ENCODE measurements at regions of chr6 and their contacts with region 1.

Region 1: GRCh38 chr6:134097114-134097707 is 44.8 kb upstream of the SLC2A12 start:
- DNase-seq: peak; percentile 27 to 78 (median 65)
- ATAC-seq: no peak
- H3K4me3 ChIP-seq: no peak overlapping the region
- H3K4me3 Mint-ChIP-seq: no peak overlapping the region
- H3K27ac ChIP-seq: no peak overlapping the region
- H3K27ac Mint-ChIP-seq: no peak overlapping the region
- H3K4me1 ChIP-seq: no peaks in the 10 kb centered on the region
- H3K4me1 Mint-ChIP-seq: no peaks in the 10 kb centered on the region
- H3K27me3 ChIP-seq: peaks cover 0 to 3% of the 10 kb centered on the region in 2 experiments
- H3K27me3 Mint-ChIP-seq: peaks cover 13% of the 10 kb centered on the region
- CTCF ChIP-seq: peak; percentile 88

Region 2: GRCh38 chr6:132830334-132830751 is 1266.9 kb before region 1 on chr6:
- CTCF ChIA-PET with region 1: no interaction called
- POLR2A ChIA-PET with region 1: no interaction called
- intact Hi-C with region 1: loop called in 1 of 2 experiments (anchors 5 kb)
- DNase-seq: no peak
- ATAC-seq: no peak
- H3K4me3 ChIP-seq: no peak overlapping the region
- H3K4me3 Mint-ChIP-seq: no peak overlapping the region
- H3K27ac ChIP-seq: no peak overlapping the region
- H3K27ac Mint-ChIP-seq: no peak overlapping the region
- H3K4me1 ChIP-seq: no peaks in the 10 kb centered on the region
- H3K4me1 Mint-ChIP-seq: no peaks in the 10 kb centered on the region
- H3K27me3 ChIP-seq: no peaks in the 10 kb centered on the region
- H3K27me3 Mint-ChIP-seq: no peaks in the 10 kb centered on the region
- CTCF ChIP-seq: no peak

Region 3: GRCh38 chr6:133568970-133569889 is 528.0 kb before region 1 on chr6:
- CTCF ChIA-PET with region 1: no interaction called
- POLR2A ChIA-PET with region 1: no interaction called
- intact Hi-C with region 1: loop called in 1 of 2 experiments (anchors 10 kb)
- DNase-seq: peak in 2 of 9 experiments; percentile 12 to 33
- ATAC-seq: no peak
- H3K4me3 ChIP-seq: no peak overlapping the region
- H3K4me3 Mint-ChIP-seq: peak overlapping the region; percentile 44
- H3K27ac ChIP-seq: no peak overlapping the region
- H3K27ac Mint-ChIP-seq: no peak overlapping the region
- H3K4me1 ChIP-seq: no peaks in the 10 kb centered on the region
- H3K4me1 Mint-ChIP-seq: peaks cover 6% of the 10 kb centered on the region
- H3K27me3 ChIP-seq: peaks cover 0 to 3% of the 10 kb centered on the region in 2 experiments
- H3K27me3 Mint-ChIP-seq: peaks cover 25% of the 10 kb centered on the region
- CTCF ChIP-seq: peak; percentile 43

Region 4: GRCh38 chr6:133916650-133917151 is 180.5 kb before region 1 on chr6:
- CTCF ChIA-PET with region 1: interaction called, 170 read pairs
- POLR2A ChIA-PET with region 1: interaction called, 3 read pairs
- intact Hi-C with region 1: no loop called
- DNase-seq: peak; percentile 21 to 79 (median 70)
- ATAC-seq: peak; percentile 52
- H3K4me3 ChIP-seq: no peak overlapping the region
- H3K4me3 Mint-ChIP-seq: no peak overlapping the region
- H3K27ac ChIP-seq: no peak overlapping the region
- H3K27ac Mint-ChIP-seq: no peak overlapping the region
- H3K4me1 ChIP-seq: peaks cover 5% of the 10 kb centered on the region
- H3K4me1 Mint-ChIP-seq: peaks cover 3% of the 10 kb centered on the region
- H3K27me3 ChIP-seq: no peaks in the 10 kb centered on the region
- H3K27me3 Mint-ChIP-seq: peaks cover 13% of the 10 kb centered on the region
- CTCF ChIP-seq: peak; percentile 71

Region 5: GRCh38 chr6:134063966-134064445 is 33.2 kb before region 1 on chr6:
- CTCF ChIA-PET with region 1: interaction called, 29 read pairs
- POLR2A ChIA-PET with region 1: no interaction called
- intact Hi-C with region 1: loop called in 1 of 2 experiments (anchors 2 kb)
- DNase-seq: peak; percentile 6 to 75 (median 50)
- ATAC-seq: peak; percentile 98
- H3K4me3 ChIP-seq: no peak overlapping the region
- H3K4me3 Mint-ChIP-seq: no peak overlapping the region
- H3K27ac ChIP-seq: no peak overlapping the region
- H3K27ac Mint-ChIP-seq: no peak overlapping the region
- H3K4me1 ChIP-seq: no peaks in the 10 kb centered on the region
- H3K4me1 Mint-ChIP-seq: peaks cover 2% of the 10 kb centered on the region
- H3K27me3 ChIP-seq: no peaks in the 10 kb centered on the region
- H3K27me3 Mint-ChIP-seq: no peaks in the 10 kb centered on the region
- CTCF ChIP-seq: peak; percentile 75

Region 6: GRCh38 chr6:134080171-134080795 is 16.9 kb before region 1 on chr6:
- CTCF ChIA-PET with region 1: interaction called, 16 read pairs
- POLR2A ChIA-PET with region 1: no interaction called
- intact Hi-C with region 1: no loop called
- DNase-seq: no peak
- ATAC-seq: no peak
- H3K4me3 ChIP-seq: no peak overlapping the region
- H3K4me3 Mint-ChIP-seq: no peak overlapping the region
- H3K27ac ChIP-seq: no peak overlapping the region
- H3K27ac Mint-ChIP-seq: no peak overlapping the region
- H3K4me1 ChIP-seq: no peaks in the 10 kb centered on the region
- H3K4me1 Mint-ChIP-seq: peaks cover 13% of the 10 kb centered on the region
- H3K27me3 ChIP-seq: no peaks in the 10 kb centered on the region
- H3K27me3 Mint-ChIP-seq: peaks cover 2% of the 10 kb centered on the region
- CTCF ChIP-seq: no peak

Region 7: GRCh38 chr6:134123666-134124208 is 26.5 kb after region 1 on chr6:
- CTCF ChIA-PET with region 1: interaction called, 12 read pairs
- POLR2A ChIA-PET with region 1: no interaction called
- intact Hi-C with region 1: no loop called
- DNase-seq: peak in 5 of 9 experiments; percentile 2 to 69 (median 47)
- ATAC-seq: peak; percentile 99
- H3K4me3 ChIP-seq: no peak overlapping the region
- H3K4me3 Mint-ChIP-seq: no peak overlapping the region
- H3K27ac ChIP-seq: no peak overlapping the region
- H3K27ac Mint-ChIP-seq: no peak overlapping the region
- H3K4me1 ChIP-seq: no peaks in the 10 kb centered on the region
- H3K4me1 Mint-ChIP-seq: peaks cover 4% of the 10 kb centered on the region
- H3K27me3 ChIP-seq: no peaks in the 10 kb centered on the region
- H3K27me3 Mint-ChIP-seq: no peaks in the 10 kb centered on the region
- CTCF ChIP-seq: peak; percentile 92

Region 8: GRCh38 chr6:134196568-134197193 is 99.5 kb after region 1 on chr6:
- CTCF ChIA-PET with region 1: no interaction called
- POLR2A ChIA-PET with region 1: no interaction called
- intact Hi-C with region 1: no loop called
- DNase-seq: no peak
- ATAC-seq: no peak
- H3K4me3 ChIP-seq: no peak overlapping the region
- H3K4me3 Mint-ChIP-seq: no peak overlapping the region
- H3K27ac ChIP-seq: no peak overlapping the region
- H3K27ac Mint-ChIP-seq: no peak overlapping the region
- H3K4me1 ChIP-seq: no peaks in the 10 kb centered on the region
- H3K4me1 Mint-ChIP-seq: peaks cover 12% of the 10 kb centered on the region
- H3K27me3 ChIP-seq: no peaks in the 10 kb centered on the region
- H3K27me3 Mint-ChIP-seq: no peaks in the 10 kb centered on the region
- CTCF ChIP-seq: no peak

Measured in CD8-positive, alpha-beta T cell (primary cell).